Posterior vena cava (tissue), 2 donors: ENCODE measurements at regions of chr3 and their contacts with region 1.

Region 1: GRCh38 chr3:190739641-190740185 is 122.8 kb downstream of the GMNC start:
- DNase-seq: no peak

Region 2: GRCh38 chr3:190701096-190701532 is 38.6 kb before region 1 on chr3:
- intact Hi-C with region 1: no loop called
- DNase-seq: no peak

Region 3: GRCh38 chr3:190721330-190721729 is 18.4 kb before region 1 on chr3:
- intact Hi-C with region 1: loop called in 1 of 2 experiments (anchors 2 kb)
- DNase-seq: no peak

Region 4: DNA sequence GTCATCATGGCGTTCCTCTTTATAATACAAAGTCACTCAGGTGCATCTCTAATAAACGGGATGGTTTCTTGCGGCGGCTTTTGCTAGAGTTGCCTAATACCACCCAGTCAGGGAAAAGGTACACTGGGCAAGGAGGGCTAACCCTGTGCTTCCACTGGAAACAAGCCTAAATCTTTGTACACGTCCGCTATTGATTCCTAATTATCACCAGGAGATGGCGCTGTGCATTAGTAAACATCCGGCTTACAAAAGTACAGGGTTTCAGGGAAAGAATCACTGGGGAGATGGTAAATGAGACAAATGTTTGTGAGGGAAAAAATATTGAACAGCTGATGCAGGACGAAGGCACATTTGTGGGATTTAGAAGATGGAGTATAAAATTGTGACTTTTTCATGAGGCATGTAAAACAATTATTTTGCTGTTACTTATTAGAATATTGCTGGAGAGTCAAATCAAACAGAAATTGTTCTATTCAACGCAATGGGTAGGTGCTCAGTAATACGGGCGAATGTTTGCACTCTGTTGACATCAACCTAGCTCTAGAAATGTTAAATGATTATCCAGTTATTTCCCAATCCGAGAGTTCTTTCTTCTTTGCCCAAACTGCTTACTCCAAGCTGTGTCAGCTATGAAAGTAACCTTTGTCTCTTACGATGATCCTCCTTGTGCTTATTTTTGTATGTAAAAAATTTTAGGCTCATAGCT is 72.2 kb after region 1 on chr3:
- intact Hi-C with region 1: no loop called
- DNase-seq: no peak

Region 5: GRCh38 chr3:191076903-191077552 is 337.3 kb after region 1 on chr3:
- intact Hi-C with region 1: no loop called
- DNase-seq: peak; percentile 54